Vagina (tissue), 2 donors: ENCODE measurements at regions of chr17 and their contacts with region 1.

Region 1: DNA sequence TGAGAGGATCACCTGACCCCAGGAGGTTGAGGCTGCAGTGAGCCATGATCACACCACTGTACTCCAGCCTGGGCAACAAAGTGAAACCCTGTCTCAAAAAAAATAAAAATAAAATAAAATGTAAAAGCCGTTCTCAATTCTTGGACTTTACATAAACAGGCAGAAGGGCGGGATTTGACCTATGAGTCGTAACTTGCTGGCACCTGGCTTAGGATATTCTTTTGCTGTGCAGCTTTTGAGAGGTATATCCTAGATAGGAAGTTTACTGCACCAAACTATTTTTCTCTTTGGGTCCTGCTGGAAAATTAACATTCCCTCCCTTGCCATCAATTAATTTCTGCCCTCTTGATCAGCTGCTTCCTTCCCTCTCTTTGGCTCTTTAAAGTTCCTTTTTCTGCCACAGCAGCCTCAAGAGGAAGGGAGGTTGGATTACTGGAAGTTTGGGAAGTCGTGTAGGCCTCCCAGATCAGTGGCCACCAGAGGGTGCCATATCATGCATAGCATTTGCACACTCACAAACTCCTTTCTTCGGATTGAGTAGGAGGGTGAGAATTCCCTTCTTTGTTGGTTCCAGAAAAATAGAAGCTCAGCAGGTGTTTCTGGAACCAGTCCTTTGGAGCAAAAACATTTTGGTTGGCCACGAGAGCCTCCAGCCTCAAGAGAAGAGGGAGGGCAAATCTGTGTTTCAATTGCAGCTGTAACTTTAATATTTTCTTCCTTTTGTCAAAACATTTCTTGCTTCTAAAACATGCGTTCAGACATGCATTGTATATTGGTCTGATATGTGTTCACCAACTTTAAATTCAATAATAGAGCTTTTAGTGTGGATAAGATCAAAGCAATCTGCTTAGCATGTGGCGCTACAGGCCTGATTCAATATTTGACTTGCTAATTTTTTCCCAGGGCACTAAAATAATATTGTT is 147.3 kb downstream of the CCDC182 start:
- DNase-seq: no peak
- H3K4me3 ChIP-seq: no peak overlapping the region
- H3K27ac ChIP-seq: no peak overlapping the region
- H3K4me1 ChIP-seq: no peaks in the 10 kb centered on the region
- H3K27me3 ChIP-seq: no peaks in the 10 kb centered on the region
- CTCF ChIP-seq: peak; percentile 48 to 63 (median 56)
- POLR2A ChIP-seq: no peak

Region 2: DNA sequence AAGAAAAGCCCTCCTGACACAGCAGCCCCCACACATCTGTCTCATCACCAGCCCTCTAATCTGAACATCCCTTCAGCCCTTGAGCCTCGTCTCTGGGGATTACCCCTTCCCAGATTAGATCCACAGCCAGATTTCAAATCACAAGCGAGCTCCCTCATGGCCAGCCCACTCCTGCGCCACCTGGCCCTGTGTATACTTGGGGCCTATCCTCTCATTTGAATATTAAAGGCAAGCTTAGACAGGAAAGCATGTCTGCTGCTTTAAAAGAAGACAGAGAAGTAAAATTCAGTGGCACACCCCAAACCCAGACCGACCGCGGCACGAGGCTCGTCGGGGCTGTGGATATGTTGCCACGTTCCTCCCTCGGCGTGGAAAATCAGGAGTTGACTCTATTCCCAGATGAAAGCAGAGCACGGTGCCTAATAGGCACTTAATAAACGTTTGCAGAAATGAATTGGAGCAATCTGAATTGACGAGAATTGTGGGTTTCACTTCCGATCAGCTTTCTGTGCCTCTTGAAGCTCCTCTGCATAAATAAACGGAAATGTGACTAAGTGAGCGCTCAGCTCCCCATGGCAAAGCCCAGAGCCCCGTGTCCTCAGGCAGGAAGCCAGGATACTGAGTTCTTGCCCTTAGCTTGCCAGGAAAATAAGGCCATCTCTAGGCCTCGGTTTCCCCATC is 39.3 kb after region 1 on chr17:
- intact Hi-C with region 1: loop called (anchors 1 kb)
- DNase-seq: no peak
- H3K4me3 ChIP-seq: no peak overlapping the region
- H3K27ac ChIP-seq: no peak overlapping the region
- H3K4me1 ChIP-seq: no peaks in the 10 kb centered on the region
- H3K27me3 ChIP-seq: no peaks in the 10 kb centered on the region
- CTCF ChIP-seq: no peak
- POLR2A ChIP-seq: no peak